ENCODE measurements at regions of chr14 and their contacts with region 1.

Region 1: DNA sequence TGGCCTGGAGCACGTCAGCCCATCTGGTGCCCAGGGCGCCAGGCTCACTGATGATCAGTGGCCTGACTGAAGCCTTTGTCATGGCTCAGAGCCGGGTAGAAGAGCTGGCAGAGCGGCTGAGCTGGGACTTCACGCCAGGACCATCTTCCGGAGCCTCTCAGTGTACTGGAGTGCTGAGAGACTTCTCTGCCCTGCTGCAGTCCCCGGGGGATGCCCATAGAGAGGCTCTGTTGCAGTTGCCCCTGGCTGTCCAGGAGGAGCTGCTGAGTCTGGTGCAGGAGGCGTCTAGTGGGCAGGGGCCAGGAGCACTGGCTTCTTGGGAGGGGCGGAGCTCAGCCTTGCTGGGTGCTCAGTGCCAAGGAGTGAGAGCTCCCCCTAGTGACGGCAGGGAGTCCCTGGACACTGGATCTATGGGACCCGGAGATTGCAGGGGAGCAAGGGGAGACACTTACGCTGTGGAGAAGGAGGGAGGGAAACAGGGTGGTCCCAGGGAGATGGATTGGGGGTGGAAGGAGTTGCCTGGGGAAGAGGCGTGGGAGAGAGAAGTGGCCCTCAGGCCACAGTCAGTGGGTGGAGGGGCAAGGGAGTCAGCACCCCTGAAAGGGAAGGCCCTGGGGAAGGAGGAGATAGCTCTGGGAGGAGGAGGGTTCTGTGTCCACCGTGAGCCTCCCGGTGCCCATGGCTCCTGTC is 2.0 kb downstream of the KHNYN start:
- DNase-seq: peak; percentile 95
- H3K4me3 Mint-ChIP-seq: peak overlapping the region; percentile 69
- H3K27ac Mint-ChIP-seq: peak overlapping the region; percentile 28
- H3K4me1 Mint-ChIP-seq: peaks cover 24% of the 10 kb centered on the region
- H3K27me3 Mint-ChIP-seq: no peaks in the 10 kb centered on the region
- CTCF ChIP-seq: peak; percentile 77

Region 2: DNA sequence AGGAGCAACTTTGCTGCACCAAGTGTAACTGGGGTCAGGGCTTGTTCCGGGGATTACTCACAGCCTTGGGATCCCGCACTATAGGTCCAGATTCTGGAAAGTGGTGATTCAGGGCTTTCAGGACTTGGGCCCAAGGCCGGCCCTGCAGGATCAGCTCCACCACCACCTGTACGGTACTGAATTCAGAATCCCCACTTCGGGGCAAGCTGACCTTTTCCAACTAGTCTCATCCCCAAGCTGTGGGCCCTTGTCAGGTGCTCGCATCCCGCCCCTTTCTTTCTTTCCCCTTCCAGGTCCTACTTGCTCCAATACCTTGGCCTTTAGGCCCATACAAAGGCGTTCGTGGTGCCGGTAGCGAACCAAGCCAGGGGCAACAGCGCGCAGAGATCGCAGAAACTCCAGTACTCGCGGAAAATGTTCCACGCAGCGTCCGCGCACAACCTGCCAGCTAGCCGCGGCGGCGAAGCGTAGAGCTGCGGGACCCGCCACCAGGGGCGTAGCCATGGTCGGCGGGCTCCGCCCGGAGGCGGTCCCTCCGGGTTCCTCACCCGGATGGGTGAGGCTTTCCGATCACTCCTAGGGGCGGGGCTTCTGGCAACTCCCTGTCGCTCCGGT is 189.8 kb before region 1 on chr14:
- CTCF ChIA-PET with region 1: interaction called, 10 read pairs
- intact Hi-C with region 1: no loop called
- DNase-seq: peak; percentile 95
- H3K4me3 Mint-ChIP-seq: peak overlapping the region; percentile 83
- H3K27ac Mint-ChIP-seq: peak overlapping the region; percentile 96
- H3K4me1 Mint-ChIP-seq: peaks cover 11% of the 10 kb centered on the region
- H3K27me3 Mint-ChIP-seq: no peaks in the 10 kb centered on the region
- CTCF ChIP-seq: peak; percentile 53

Region 3: GRCh38 chr14:24327303-24327702 is 104.4 kb before region 1 on chr14:
- CTCF ChIA-PET with region 1: interaction called, 46 read pairs
- intact Hi-C with region 1: loop called (anchors 1 kb)
- DNase-seq: no peak
- H3K4me3 Mint-ChIP-seq: no peak overlapping the region
- H3K27ac Mint-ChIP-seq: no peak overlapping the region
- H3K4me1 Mint-ChIP-seq: peaks cover 6% of the 10 kb centered on the region
- H3K27me3 Mint-ChIP-seq: peaks cover 16% of the 10 kb centered on the region
- CTCF ChIP-seq: no peak

Region 4: GRCh38 chr14:24332268-24332993 is 99.3 kb before region 1 on chr14:
- CTCF ChIA-PET with region 1: interaction called, 46 read pairs
- intact Hi-C with region 1: loop called (anchors 1 kb)
- DNase-seq: peak; percentile 79
- H3K4me3 Mint-ChIP-seq: peak overlapping the region; percentile 72
- H3K27ac Mint-ChIP-seq: peak overlapping the region; percentile 52
- H3K4me1 Mint-ChIP-seq: peaks cover 32% of the 10 kb centered on the region
- H3K27me3 Mint-ChIP-seq: no peaks in the 10 kb centered on the region
- CTCF ChIP-seq: peak; percentile 54

Region 5: DNA sequence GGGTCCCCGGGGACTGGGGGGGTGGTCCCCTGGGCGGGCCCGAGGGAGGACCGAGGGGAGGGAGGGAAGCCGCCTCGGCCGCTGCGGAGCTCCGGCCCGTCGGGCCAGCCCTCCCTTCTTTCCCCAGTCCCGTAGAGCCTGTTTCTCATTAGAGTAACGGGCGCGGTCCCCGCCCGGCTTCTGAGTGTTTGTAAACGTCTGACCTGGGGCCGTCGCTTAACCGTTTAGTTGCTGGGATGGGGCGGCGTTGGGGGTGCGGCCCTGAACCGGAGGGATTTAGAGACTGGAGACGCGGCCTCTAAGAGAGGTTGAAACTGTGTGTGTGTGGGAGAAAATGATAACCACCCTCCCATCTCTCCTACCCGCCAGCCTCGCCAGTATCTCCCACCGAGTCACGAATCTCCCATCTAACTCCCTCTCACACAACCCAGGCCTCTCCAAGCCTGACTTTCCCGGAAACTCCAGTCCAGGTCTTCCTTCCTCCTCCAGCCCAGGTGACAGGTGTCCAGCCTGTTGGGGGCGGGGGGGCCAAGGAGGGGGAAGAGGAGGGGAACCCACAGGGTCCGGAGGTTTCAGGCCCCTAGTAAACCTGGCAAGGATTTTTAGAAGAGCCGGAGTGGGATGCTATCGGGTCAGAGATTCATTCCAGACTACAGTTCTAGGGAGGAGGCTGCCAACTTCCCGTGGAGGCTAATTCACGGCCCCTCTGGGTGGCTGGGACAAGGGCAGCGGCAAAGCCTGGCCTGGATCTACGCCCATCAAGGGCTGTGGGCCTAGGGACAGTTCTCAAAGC is 64.8 kb before region 1 on chr14:
- CTCF ChIA-PET with region 1: interaction called, 53 read pairs
- intact Hi-C with region 1: loop called (anchors 1 kb)
- DNase-seq: peak; percentile 93
- H3K4me3 Mint-ChIP-seq: peak overlapping the region; percentile 66
- H3K27ac Mint-ChIP-seq: peak overlapping the region; percentile 69
- H3K4me1 Mint-ChIP-seq: peaks cover 11% of the 10 kb centered on the region
- H3K27me3 Mint-ChIP-seq: no peaks in the 10 kb centered on the region
- CTCF ChIP-seq: no peak

Region 6: GRCh38 chr14:24392325-24393091 is 39.2 kb before region 1 on chr14:
- CTCF ChIA-PET with region 1: interaction called, 13 read pairs
- intact Hi-C with region 1: loop called (anchors 2 kb)
- DNase-seq: peak; percentile 71
- H3K4me3 Mint-ChIP-seq: peak overlapping the region; percentile 55
- H3K27ac Mint-ChIP-seq: peak overlapping the region; percentile 95
- H3K4me1 Mint-ChIP-seq: peaks cover 47% of the 10 kb centered on the region
- H3K27me3 Mint-ChIP-seq: no peaks in the 10 kb centered on the region
- CTCF ChIP-seq: no peak

Region 7: GRCh38 chr14:24399999-24400718 is 31.6 kb before region 1 on chr14:
- CTCF ChIA-PET with region 1: interaction called, 11 read pairs
- intact Hi-C with region 1: no loop called
- DNase-seq: no peak
- H3K4me3 Mint-ChIP-seq: peak overlapping the region; percentile 64
- H3K27ac Mint-ChIP-seq: no peak overlapping the region
- H3K4me1 Mint-ChIP-seq: peaks cover 28% of the 10 kb centered on the region
- H3K27me3 Mint-ChIP-seq: no peaks in the 10 kb centered on the region
- CTCF ChIP-seq: no peak

Region 8: GRCh38 chr14:24473211-24473610 is 41.5 kb after region 1 on chr14:
- CTCF ChIA-PET with region 1: no interaction called
- intact Hi-C with region 1: no loop called
- DNase-seq: no peak
- H3K4me3 Mint-ChIP-seq: no peak overlapping the region
- H3K27ac Mint-ChIP-seq: no peak overlapping the region
- H3K4me1 Mint-ChIP-seq: no peaks in the 10 kb centered on the region
- H3K27me3 Mint-ChIP-seq: no peaks in the 10 kb centered on the region
- CTCF ChIP-seq: no peak

Measured in Calu3 (cell line).